Uterus (tissue), 4 donors: ENCODE measurements at regions of chr15 and their contacts with region 1.

Region 1: GRCh38 chr15:70097337-70098169 is at the start of gene TLE3:
- DNase-seq: peak; percentile 98 to 99
- H3K4me3 ChIP-seq: peak within 1 kb of the TSS; percentile 68 to 76
- H3K27ac ChIP-seq: peak within 1 kb of the TSS; percentile 94 to 99
- H3K4me1 ChIP-seq: peaks cover 0 to 9% of the 10 kb centered on the region in 2 donors
- H3K27me3 ChIP-seq: no peaks in the 10 kb centered on the region
- CTCF ChIP-seq: peak in 3 of 4 experiments; percentile 18 to 42 (median 41)
- POLR2A ChIP-seq: peak; percentile 94 to 97
- total RNA-seq, gene TLE3: 7.4 to 244 (median 49.4) TPM

Region 2: DNA sequence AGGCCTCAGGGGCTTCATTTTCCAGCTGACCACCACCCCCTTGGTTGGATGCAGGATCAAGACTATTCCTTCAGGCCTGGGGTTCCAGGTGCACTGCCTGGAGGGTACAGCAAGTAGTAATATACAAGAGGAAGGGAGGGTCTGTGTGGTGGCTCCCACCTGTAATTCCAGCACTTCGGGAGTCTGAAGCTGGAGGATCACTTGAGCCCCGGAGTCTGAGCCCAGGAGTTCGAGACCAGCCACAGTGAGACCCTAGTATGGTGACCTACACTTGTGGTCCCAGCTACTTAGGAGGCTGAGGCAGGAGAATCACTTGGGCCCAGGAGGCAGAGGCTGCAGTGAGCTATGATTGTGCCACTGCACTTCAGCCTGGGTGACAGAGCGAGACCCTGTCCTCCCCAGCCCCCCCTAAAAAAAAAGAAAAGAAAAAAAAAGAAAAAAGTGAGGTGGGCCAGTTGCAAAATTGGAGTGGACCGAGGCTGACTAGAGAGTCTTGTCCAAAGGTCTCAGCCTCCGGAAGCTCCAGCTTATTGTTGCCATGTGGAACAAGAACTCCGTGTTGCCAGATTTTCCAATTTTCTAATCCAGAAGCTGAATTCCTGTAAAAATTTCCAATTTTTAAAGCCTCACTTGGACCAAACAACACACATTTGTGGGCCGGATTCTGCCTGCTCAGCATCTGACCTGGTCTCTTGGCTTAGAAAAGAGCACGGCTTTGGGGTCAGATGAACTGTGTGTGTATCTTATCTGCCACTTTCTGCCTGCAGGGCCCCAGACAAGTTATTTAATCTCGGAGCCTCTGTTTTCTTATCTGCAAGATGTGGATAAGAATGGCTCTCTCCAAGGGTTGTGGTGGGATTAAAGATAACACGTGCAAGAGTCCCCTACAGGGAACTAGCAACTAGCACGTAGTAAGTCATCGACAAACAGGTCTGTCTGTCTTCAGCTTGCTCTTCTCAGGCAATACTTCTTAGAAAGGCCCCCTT is 73.6 kb after region 1 on chr15:
- intact Hi-C with region 1: no loop called
- DNase-seq: no peak
- H3K4me3 ChIP-seq: no peak overlapping the region
- H3K27ac ChIP-seq: no peak overlapping the region
- H3K4me1 ChIP-seq: no peaks in the 10 kb centered on the region
- H3K27me3 ChIP-seq: no peaks in the 10 kb centered on the region
- CTCF ChIP-seq: no peak
- POLR2A ChIP-seq: no peak

Region 3: DNA sequence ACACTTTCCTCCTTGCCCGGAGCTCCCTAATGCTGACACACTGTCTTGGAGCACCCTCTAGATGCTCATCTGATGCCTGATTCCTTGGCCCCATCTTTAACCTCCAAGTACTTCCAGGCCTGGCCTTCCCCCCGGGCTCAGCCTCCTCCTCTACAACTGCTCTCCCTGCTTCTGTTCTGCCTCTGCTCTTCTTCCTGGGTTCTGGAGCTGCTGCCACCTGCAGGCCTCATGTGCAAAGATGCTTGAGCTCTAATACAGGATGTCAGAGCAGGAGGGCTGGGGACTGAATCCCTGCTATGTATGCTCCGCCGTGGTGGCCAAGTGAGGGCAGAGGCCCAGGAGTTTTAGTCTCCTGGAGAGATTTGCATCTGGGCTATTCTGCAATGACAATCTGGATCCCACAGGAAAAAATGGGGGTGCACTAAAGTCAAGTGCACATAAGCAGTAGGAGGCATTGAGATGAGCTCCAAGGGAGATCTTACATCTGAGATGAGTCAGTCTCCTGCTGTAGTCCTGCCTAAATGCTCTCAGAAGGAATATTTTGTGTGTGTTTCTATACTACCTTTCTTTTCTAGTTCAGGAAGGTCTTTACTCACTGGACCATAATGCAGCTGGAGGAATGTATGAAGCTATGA is 369.5 kb after region 1 on chr15:
- intact Hi-C with region 1: loop called (anchors 10 kb)
- DNase-seq: peak; percentile 48 to 51
- H3K4me3 ChIP-seq: no peak overlapping the region
- H3K27ac ChIP-seq: no peak overlapping the region
- H3K4me1 ChIP-seq: no peaks in the 10 kb centered on the region
- H3K27me3 ChIP-seq: no peaks in the 10 kb centered on the region
- CTCF ChIP-seq: peak; percentile 32 to 53 (median 48)
- POLR2A ChIP-seq: no peak